IMR-90 (cell line): ENCODE measurements at regions of chr12 and their contacts with region 1.

Region 1: GRCh38 chr12:32455607-32456071 is 56.3 kb downstream of the FGD4 start:
- DNase-seq: peak; percentile 82
- ATAC-seq: peak; percentile 83
- H3K4me3 ChIP-seq: peak overlapping the region; percentile 46; the same call in 1 of the 2 replicates
- H3K27ac ChIP-seq: no peak overlapping the region
- H3K4me1 ChIP-seq: peaks cover 4% of the 10 kb centered on the region; the same call in 1 of the 2 replicates
- H3K27me3 ChIP-seq: no peaks in the 10 kb centered on the region
- CTCF ChIP-seq: peak; percentile 75
- POLR2A ChIP-seq: no peak
- RAD21 ChIP-seq: peak; percentile 81

Region 2: GRCh38 chr12:32365473-32366064 is 90.1 kb before region 1 on chr12:
- CTCF ChIA-PET with region 1: interaction called, 4 read pairs
- POLR2A ChIA-PET with region 1: no interaction called
- dilution Hi-C with region 1: no loop called
- in situ Hi-C with region 1: no loop called
- intact Hi-C with region 1: loop called (anchors 2 kb)
- DNase-seq: peak; percentile 82
- ATAC-seq: peak; percentile 94
- H3K4me3 ChIP-seq: no peak overlapping the region
- H3K27ac ChIP-seq: no peak overlapping the region
- H3K4me1 ChIP-seq: no peaks in the 10 kb centered on the region
- H3K27me3 ChIP-seq: no peaks in the 10 kb centered on the region
- CTCF ChIP-seq: peak; percentile 85
- POLR2A ChIP-seq: no peak
- RAD21 ChIP-seq: peak; percentile 90

Region 3: DNA sequence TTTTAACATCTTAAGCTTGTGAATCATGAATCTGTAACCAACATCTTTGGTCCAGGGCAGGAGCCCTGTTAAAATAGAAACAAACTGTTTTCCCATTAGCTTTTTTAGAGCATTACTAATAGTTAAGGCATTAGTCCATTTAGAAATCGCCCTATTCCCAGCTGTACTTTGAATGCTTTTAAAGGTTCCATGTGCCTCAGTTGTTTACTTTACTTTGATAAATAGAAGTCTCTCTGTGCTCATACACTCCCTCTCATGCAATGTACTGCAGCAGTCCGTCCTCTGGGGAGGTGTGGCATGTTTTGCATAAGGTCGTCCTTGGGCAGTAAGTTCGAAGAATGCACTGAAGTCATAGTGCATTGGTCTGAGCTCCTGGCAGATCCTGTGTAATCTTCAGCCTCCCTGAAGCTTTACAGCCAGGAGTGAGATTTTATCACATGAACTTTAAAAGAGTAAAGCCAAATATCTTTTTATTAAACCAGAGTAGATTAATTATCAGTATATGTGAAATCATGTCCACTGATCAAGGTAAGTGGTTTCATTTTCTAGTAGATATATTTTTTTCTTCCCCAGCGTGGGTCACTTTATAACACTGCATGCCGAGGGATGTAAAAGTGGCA is 78.4 kb after region 1 on chr12:
- CTCF ChIA-PET with region 1: no interaction called
- POLR2A ChIA-PET with region 1: no interaction called
- dilution Hi-C with region 1: no loop called
- in situ Hi-C with region 1: no loop called
- intact Hi-C with region 1: loop called (anchors 2 kb)
- DNase-seq: peak; percentile 98
- ATAC-seq: peak; percentile 90
- H3K4me3 ChIP-seq: peak overlapping the region; percentile 50
- H3K27ac ChIP-seq: peak overlapping the region; percentile 6; the same call in 1 of the 2 replicates
- H3K4me1 ChIP-seq: peaks cover 4% of the 10 kb centered on the region
- H3K27me3 ChIP-seq: no peaks in the 10 kb centered on the region
- CTCF ChIP-seq: no peak
- POLR2A ChIP-seq: peak; percentile 80
- RAD21 ChIP-seq: no peak

Region 4: DNA sequence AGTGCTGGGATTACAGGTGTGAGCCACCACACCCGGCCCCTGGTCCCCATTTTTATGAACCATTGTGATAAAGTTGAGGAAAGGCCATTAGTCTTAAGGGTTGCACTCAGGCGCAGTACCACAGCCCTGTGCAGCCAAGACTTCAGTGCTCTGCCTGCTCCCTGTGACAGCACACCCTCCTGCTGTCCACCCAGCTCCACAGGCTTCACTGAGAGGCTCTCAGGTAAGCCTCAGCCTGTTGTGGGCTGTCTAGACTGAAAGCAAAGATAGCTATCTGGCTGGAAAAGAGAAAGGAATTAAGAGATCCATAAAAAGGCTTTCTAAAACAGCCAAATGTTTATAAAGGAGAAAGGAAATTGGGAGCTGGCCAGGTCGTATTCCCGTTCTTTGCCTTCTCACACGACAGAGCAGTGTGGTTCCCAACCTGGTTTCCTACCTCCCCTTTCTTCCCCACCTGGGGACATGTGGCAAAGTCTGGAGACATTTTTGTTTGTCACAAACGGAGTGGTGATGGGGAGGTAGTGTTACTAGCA is 204.3 kb after region 1 on chr12:
- CTCF ChIA-PET with region 1: interaction called, 13 read pairs
- POLR2A ChIA-PET with region 1: no interaction called
- dilution Hi-C with region 1: no loop called
- in situ Hi-C with region 1: loop called (anchors 5 kb)
- intact Hi-C with region 1: loop called (anchors 1 kb)
- DNase-seq: no peak
- ATAC-seq: peak; percentile 47
- H3K4me3 ChIP-seq: no peak overlapping the region
- H3K27ac ChIP-seq: no peak overlapping the region
- H3K4me1 ChIP-seq: 0 out of 2 replicates have a peak, but pooled peaks cover 2% of the 10 kb centered on the region
- H3K27me3 ChIP-seq: no peaks in the 10 kb centered on the region
- CTCF ChIP-seq: no peak
- POLR2A ChIP-seq: no peak
- RAD21 ChIP-seq: no peak

Region 5: GRCh38 chr12:32671930-32672780 is 216.5 kb after region 1 on chr12:
- CTCF ChIA-PET with region 1: interaction called, 14 read pairs
- POLR2A ChIA-PET with region 1: no interaction called
- dilution Hi-C with region 1: no loop called
- in situ Hi-C with region 1: no loop called
- intact Hi-C with region 1: loop called (anchors 1 kb)
- DNase-seq: peak; percentile 83
- ATAC-seq: peak; percentile 92
- H3K4me3 ChIP-seq: no peak overlapping the region
- H3K27ac ChIP-seq: no peak overlapping the region
- H3K4me1 ChIP-seq: no peaks in the 10 kb centered on the region
- H3K27me3 ChIP-seq: no peaks in the 10 kb centered on the region
- CTCF ChIP-seq: peak; percentile 77
- POLR2A ChIP-seq: no peak
- RAD21 ChIP-seq: peak; percentile 83

Region 6: DNA sequence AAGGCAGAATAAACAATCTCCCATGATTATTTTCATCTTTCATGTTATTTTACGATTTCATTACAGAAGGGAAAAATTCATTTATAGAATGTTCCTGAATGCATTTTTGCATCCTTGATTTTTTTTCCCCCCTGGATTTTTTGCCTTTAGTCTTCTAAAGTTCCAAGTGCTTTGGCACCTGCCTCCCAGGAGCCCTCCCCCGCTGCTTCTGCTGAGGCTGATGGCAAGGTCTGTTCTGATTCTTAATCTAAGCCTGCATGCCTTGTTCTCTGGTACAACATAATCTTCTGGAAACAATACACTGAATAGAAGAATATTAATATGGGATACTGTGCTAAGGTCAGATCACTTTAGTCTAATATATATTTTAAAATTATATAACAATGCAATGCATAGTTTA is 282.1 kb after region 1 on chr12:
- CTCF ChIA-PET with region 1: no interaction called
- POLR2A ChIA-PET with region 1: no interaction called
- dilution Hi-C with region 1: no loop called
- in situ Hi-C with region 1: no loop called
- intact Hi-C with region 1: loop called (anchors 5 kb)
- DNase-seq: no peak
- ATAC-seq: no peak
- H3K4me3 ChIP-seq: no peak overlapping the region
- H3K27ac ChIP-seq: no peak overlapping the region
- H3K4me1 ChIP-seq: no peaks in the 10 kb centered on the region
- H3K27me3 ChIP-seq: no peaks in the 10 kb centered on the region
- CTCF ChIP-seq: no peak
- POLR2A ChIP-seq: no peak
- RAD21 ChIP-seq: no peak

Region 7: GRCh38 chr12:34022079-34022830 is 1566.6 kb after region 1 on chr12 and contains the start of gene ALG10:
- CTCF ChIA-PET with region 1: no interaction called
- POLR2A ChIA-PET with region 1: no interaction called
- dilution Hi-C with region 1: no loop called
- in situ Hi-C with region 1: loop called (anchors 25 kb)
- intact Hi-C with region 1: loop called (anchors 5 kb)
- DNase-seq: peak; percentile 97
- ATAC-seq: peak; percentile 100
- H3K4me3 ChIP-seq: peak within 1 kb of the TSS; percentile 65
- H3K27ac ChIP-seq: peak within 1 kb of the TSS; percentile 48
- H3K4me1 ChIP-seq: no peaks in the 10 kb centered on the region
- H3K27me3 ChIP-seq: no peaks in the 10 kb centered on the region
- CTCF ChIP-seq: peak; percentile 78
- POLR2A ChIP-seq: peak; percentile 42
- RAD21 ChIP-seq: peak; percentile 79
- total RNA-seq, gene ALG10: 7.2 and 9.7 TPM in 2 replicates